IMR-90 (cell line): ENCODE measurements at regions of chr14 and their contacts with region 1.

Region 1: GRCh38 chr14:105086833-105087307 is 21.6 kb upstream of the GPR132 start:
- DNase-seq: peak; percentile 71
- ATAC-seq: peak; percentile 70
- H3K4me3 ChIP-seq: peak overlapping the region; percentile 48
- H3K27ac ChIP-seq: peak overlapping the region; percentile 42
- H3K4me1 ChIP-seq: peaks cover 18% of the 10 kb centered on the region
- H3K27me3 ChIP-seq: no peaks in the 10 kb centered on the region
- CTCF ChIP-seq: peak; percentile 83
- POLR2A ChIP-seq: no peak
- RAD21 ChIP-seq: peak; percentile 73

Region 2: DNA sequence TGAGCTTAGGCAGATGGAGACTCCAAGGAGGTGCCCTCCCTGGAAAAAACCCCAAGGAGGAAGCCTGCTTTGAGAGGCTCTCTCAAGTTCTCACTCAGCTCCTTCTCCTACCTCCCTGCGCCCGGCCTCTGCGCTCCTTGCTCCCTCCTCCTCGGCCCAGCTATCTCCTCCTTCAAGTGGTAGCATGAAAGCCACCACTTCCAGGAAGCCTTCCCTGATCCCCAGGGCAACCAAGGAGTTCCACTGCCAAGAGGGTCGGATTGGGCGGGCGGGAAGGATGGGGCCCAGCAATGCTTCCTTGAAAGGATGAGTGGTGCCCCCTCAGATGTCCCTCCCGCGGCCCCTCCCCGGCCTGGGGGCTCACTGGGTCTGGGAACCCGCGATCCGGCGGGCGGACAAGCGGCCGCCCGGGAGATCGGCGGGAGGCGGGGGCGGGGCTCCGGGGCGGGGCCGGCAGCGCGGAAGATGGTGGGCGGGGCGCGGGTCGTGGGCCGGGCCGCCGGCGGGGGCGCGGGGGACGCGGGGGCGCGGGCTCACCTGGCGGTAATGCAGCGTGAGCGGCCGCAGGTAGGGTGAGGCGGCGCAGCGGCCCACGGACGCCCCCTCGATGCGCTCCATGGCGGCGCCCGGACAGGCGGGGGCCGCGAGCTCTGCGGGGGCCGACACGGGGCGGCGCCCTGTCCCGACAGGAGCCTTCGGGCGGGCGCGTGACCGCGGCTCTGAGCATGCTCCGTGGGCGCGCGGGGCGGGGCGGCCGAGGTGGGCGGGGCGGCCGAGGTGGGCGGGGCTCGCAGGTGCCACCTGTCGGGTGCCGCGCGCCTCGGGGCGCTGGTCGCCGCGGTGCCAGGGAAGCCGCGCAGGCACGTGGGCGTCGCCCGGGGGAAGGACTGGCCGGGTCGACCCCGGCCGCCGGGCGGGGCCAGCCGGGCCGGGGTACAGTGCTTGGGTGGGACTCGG is 94.0 kb after region 1 on chr14 and contains the start of gene NUDT14:
- CTCF ChIA-PET with region 1: no interaction called
- POLR2A ChIA-PET with region 1: no interaction called
- dilution Hi-C with region 1: no loop called
- in situ Hi-C with region 1: no loop called
- intact Hi-C with region 1: loop called (anchors 5 kb)
- DNase-seq: peak; percentile 25
- ATAC-seq: peak; percentile 92
- H3K4me3 ChIP-seq: peak within 1 kb of the TSS; percentile 66
- H3K27ac ChIP-seq: no peak within 1 kb of the TSS; the same call in 1 of the 2 replicates
- H3K4me1 ChIP-seq: peaks cover 3% of the 10 kb centered on the region; the same call in 1 of the 2 replicates
- H3K27me3 ChIP-seq: peaks cover 17% of the 10 kb centered on the region; the same call in 1 of the 2 replicates
- CTCF ChIP-seq: no peak
- POLR2A ChIP-seq: no peak
- RAD21 ChIP-seq: no peak
- total RNA-seq, gene NUDT14: 5.6 and 6.4 TPM in 2 replicates

Region 3: GRCh38 chr14:105203057-105203531 is 116.2 kb after region 1 on chr14:
- CTCF ChIA-PET with region 1: no interaction called
- POLR2A ChIA-PET with region 1: no interaction called
- dilution Hi-C with region 1: no loop called
- in situ Hi-C with region 1: no loop called
- intact Hi-C with region 1: loop called (anchors 1 kb)
- DNase-seq: peak; percentile 58
- ATAC-seq: peak; percentile 89
- H3K4me3 ChIP-seq: no peak overlapping the region
- H3K27ac ChIP-seq: no peak overlapping the region
- H3K4me1 ChIP-seq: peaks cover 1% of the 10 kb centered on the region; the same call in 1 of the 2 replicates
- H3K27me3 ChIP-seq: peaks cover 9% of the 10 kb centered on the region
- CTCF ChIP-seq: peak; percentile 89
- POLR2A ChIP-seq: no peak
- RAD21 ChIP-seq: peak; percentile 74

Region 4: DNA sequence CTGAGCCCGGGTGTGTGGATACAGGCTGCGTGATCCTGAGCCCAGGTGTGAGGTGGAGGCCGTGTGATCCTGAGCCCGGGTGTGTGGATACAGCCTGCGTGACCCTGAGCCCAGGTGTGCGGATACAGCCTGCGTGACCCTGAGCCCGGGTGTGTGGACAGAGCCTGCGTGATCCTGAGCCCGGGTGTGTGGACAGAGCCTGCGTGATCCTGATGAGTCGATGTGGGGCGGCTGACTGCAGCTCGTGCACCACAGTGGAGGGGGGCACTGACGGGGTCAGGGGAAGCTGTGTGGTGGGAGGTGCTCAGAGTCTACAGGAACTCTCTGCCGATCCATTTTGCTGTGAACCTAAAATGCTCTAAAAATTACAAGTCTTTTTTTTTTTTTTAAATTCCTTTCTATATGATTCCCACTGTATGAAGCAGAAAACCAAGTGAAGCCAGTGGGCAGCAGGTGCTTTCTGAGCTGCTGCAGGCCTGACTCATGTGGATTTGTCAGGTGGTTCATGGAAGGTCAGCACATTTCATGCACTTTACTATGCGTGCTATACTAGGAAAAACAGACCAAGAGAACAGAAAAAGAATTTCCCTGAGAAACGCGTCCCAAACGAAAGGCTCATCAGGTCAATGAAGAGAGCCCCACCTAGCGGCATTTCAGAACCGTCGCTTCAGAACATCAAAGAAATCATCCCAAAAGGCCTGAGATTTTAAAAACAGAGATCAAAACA is 194.7 kb after region 1 on chr14:
- CTCF ChIA-PET with region 1: interaction called, 6 read pairs
- POLR2A ChIA-PET with region 1: no interaction called
- dilution Hi-C with region 1: no loop called
- in situ Hi-C with region 1: no loop called
- intact Hi-C with region 1: loop called (anchors 1 kb)
- DNase-seq: peak; percentile 83
- ATAC-seq: peak; percentile 88
- H3K4me3 ChIP-seq: no peak overlapping the region
- H3K27ac ChIP-seq: no peak overlapping the region
- H3K4me1 ChIP-seq: no peaks in the 10 kb centered on the region; the same call in 1 of the 2 replicates
- H3K27me3 ChIP-seq: no peaks in the 10 kb centered on the region
- CTCF ChIP-seq: peak; percentile 86
- POLR2A ChIP-seq: no peak
- RAD21 ChIP-seq: peak; percentile 82

Region 5: GRCh38 chr14:105351920-105352851 is 265.3 kb after region 1 on chr14:
- CTCF ChIA-PET with region 1: no interaction called
- POLR2A ChIA-PET with region 1: no interaction called
- dilution Hi-C with region 1: no loop called
- in situ Hi-C with region 1: loop called (anchors 10 kb)
- intact Hi-C with region 1: no loop called
- DNase-seq: peak; percentile 85
- ATAC-seq: peak; percentile 95
- H3K4me3 ChIP-seq: no peak overlapping the region
- H3K27ac ChIP-seq: no peak overlapping the region
- H3K4me1 ChIP-seq: peaks cover 2% of the 10 kb centered on the region; the same call in 1 of the 2 replicates
- H3K27me3 ChIP-seq: no peaks in the 10 kb centered on the region
- CTCF ChIP-seq: peak; percentile 91
- POLR2A ChIP-seq: no peak
- RAD21 ChIP-seq: peak; percentile 97